Dendritic cell treated with granulocyte-macrophage colony-stimulating factor and Interleukin-4, amounts not matched to agents 40 ng/mL and 50 ng/mL, for 4 days (primary cell): ENCODE measurements at regions of chr9 and their contacts with region 1.

Region 1: GRCh38 chr9:133113949-133114885 is 6.8 kb downstream of the RALGDS start:
- H3K4me3 Mint-ChIP-seq: peak overlapping the region; percentile 69
- H3K27ac Mint-ChIP-seq: peak overlapping the region; percentile 99
- H3K4me1 Mint-ChIP-seq: peaks cover 84% of the 10 kb centered on the region
- H3K27me3 Mint-ChIP-seq: no peaks in the 10 kb centered on the region

Region 2: GRCh38 chr9:133137451-133138231 is 23.4 kb after region 1 on chr9:
- intact Hi-C with region 1: loop called (anchors 2 kb)
- H3K4me3 Mint-ChIP-seq: peak overlapping the region; percentile 44
- H3K27ac Mint-ChIP-seq: peak overlapping the region; percentile 85
- H3K4me1 Mint-ChIP-seq: peaks cover 99% of the 10 kb centered on the region
- H3K27me3 Mint-ChIP-seq: no peaks in the 10 kb centered on the region